Right ventricle myocardium inferior (tissue), 1 donor: ENCODE measurements at regions of chr16 and their contacts with region 1.

Region 1: GRCh38 chr16:75305364-75306098 is 54.1 kb upstream of the BCAR1 start:
- DNase-seq: no peak
- ATAC-seq: peak; percentile 90

Region 2: DNA sequence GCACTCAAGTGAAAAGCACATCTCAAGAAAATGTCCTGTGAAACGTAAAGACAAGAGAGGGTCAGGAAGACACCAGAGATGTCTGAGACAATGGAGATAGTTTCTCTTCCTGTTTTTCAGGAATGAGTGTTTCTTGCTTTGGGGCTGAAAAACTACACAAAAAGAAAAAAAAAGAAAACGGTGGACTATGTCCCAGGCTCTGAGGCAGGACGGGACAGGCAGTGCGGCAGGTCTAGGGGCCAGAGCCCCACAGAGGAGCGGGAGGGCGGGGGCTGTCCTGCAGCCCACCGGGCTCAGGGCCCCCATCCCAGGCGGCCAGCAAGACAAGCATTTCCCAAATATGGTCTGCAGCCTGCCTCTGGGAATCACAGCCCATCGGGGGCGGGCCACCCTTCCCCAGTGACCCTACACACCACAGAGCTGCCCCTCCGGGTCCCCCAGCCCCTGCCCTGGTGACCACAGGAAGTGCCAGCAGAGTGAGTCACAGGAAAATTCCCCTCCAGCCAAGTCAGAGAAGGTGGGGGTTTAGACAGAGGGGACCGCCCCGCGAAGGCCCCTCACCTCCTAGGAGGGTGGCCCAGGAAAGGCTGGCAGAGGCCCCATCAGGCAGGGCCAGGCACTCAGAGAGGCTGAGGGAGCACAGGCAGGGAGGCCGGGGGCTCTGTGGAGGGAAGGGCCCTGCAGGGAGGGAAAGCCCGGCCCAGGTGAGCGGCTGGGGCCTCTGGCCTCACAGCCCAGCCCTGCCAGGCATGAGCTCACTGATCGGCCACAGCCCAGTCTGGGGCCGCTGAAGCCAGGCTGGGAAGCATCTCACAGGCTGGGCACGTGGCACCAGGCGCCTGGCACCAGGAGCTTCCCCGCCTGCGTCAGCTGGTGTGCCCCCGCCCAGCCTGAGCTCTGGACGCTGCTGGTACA is 60.4 kb before region 1 on chr16:
- intact Hi-C with region 1: loop called (anchors 5 kb)
- DNase-seq: peak; percentile 88
- ATAC-seq: peak; percentile 77

Region 3: DNA sequence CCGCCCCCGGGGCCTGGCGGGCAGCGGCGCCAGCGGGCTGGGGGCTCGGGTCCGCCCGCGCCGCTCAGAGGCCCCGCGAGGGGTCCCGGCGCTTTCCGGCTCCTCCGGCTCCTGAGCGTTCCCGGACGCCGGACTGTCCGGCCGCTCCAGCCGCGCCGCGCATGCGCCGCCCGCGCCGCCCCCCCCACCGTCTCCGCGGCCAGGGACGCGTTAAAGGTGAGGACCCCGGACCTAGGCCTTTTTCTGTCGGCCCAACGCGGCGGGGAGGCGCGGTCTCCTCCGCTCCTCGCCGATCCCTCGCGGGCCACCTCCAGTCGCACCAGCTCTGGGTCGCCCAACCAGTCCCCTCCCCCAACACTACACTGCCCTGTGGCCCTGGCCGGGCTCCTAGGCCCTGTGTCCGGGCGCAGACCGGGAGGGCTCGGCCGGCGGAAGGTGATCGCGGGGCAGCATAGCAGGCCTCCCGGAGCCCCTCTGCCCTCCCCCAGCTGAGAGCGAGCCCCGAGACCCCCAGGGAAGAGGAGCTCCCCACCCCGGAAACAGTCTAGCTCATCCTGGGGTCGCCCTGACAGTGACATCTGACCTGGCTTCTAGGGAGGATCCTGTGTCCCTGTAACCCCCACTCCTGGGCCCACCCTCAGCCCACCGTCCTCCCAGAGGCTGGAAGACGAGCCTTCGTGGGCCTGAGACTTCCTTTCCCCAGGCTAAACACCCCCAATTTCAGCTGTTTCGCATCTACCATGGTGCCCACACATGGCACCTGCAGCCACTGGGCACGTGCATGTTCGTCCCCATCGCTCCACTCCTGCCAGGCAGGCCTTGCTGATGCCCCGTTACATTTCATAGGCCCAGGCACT is 39.5 kb before region 1 on chr16:
- intact Hi-C with region 1: loop called (anchors 5 kb)
- DNase-seq: no peak
- ATAC-seq: peak; percentile 47

Region 4: DNA sequence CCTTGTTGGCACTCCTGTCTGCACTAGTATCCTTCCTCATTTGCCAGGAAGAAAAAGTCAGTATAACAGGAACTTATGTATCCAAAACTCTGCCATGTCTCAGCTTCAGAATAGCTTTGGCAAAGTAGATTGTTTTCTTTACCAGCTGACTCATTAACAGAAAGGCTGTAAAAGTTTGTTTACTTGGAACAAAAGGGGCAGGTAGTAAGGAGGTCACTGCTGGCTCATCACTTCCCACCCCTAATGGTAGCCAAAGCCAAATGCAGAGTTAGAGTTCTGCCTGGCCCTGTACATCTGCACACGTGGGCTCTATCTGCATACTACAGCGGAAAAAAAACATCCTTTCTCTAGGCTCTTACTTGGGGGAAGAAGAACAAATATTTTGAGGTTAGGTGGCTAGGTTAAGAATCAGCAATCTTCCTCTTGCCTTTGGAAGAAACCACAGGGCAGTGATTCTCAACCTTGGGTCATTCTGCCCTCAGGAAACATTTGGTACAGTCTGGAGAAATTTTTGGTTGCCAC is 36.8 kb after region 1 on chr16:
- intact Hi-C with region 1: loop called (anchors 5 kb)
- DNase-seq: no peak
- ATAC-seq: no peak

Region 5: DNA sequence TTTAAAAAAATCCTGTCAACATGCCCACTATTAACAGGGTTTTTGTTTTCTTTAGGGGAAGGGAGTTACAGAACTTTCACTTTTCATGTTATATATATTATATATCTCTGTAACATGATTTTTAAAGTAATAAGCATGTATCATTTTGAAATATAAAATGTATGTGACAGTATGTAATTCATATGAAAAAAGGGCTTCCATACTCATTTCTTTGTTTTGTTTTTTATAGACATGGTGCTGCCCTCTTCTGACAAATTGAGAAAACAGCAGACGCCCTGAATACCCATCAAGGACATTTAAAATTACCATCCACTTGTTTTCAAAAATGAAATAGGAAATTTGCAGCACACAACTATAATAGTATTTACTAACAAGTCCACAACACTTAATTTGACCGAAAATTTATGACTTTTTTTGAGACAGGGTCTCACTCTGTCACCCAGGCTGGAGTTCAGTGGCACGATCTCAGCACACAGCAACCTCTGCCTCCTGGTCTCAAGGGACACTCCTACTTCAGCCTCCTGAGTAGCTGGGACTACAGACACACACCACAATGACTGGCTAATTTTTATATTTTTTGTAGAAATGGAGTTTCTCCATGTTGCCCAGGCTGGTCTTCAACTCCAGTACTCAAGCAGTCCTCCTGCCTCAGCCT is 97.4 kb after region 1 on chr16:
- intact Hi-C with region 1: no loop called
- DNase-seq: no peak
- ATAC-seq: no peak